ENCODE measurements at regions of chr20 and their contacts with region 1.

Region 1: GRCh38 chr20:4592316-4593148 is 129.2 kb upstream of the PRND start:
- DNase-seq: peak; percentile 38
- H3K4me3 ChIP-seq: peak overlapping the region in 3 of 4 donors; percentile 28 to 47 (median 32)
- H3K27ac ChIP-seq: no peak overlapping the region
- H3K4me1 ChIP-seq: peaks cover 7 to 13% (median 10%) of the 10 kb centered on the region in 4 donors
- H3K27me3 ChIP-seq: no peaks in the 10 kb centered on the region
- CTCF ChIP-seq: peak; percentile 68 to 96 (median 93)
- EP300 ChIP-seq: no peak
- POLR2A ChIP-seq: no peak

Region 2: DNA sequence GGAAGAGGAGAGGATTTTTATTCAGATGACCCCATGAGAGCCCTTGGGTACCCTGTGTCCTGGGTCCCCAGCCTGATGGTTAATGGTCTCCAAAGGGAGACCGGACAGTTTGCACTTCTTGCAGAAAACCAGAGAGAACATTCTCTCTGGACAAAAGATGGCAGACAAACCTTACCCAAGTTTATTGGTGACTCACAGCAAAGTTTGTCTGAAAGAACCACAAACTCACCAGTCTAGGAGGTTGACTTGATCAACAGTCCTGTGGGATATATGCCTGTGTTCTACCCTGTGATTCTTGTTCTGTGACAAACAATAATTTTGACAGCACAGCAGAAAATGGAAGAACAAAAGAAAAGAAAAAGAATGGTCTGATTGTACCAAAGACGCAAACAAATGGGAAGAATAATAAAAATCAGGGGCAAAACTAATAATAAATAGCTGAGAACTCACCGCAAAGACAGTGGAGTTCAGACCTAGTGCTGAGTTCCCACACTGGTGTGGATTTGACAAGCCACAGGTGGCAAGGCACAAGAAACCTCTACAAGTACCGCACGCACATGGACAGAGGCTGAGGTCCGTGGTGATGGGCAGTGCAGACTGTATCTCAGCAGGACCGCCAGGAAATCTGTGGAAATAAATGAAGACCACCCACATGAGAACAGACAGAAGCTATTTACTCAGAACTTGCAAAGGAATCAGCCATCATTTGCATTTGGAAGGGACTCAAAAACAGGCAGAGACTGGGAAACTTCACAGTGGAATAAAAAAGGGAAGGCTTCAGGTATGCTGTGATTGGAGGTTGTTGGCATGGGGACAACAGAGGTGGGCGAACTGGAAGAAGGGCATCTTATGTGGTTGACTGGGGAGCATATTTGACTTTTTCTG is 331.0 kb before region 1 on chr20:
- in situ Hi-C with region 1: loop called in 1 of 4 experiments (anchors 25 kb)
- intact Hi-C with region 1: no loop called
- DNase-seq: no peak
- H3K4me3 ChIP-seq: no peak overlapping the region
- H3K27ac ChIP-seq: no peak overlapping the region
- H3K4me1 ChIP-seq: no peaks in the 10 kb centered on the region
- H3K27me3 ChIP-seq: no peaks in the 10 kb centered on the region
- CTCF ChIP-seq: no peak
- EP300 ChIP-seq: no peak
- POLR2A ChIP-seq: no peak

Measured in transverse colon (tissue), 4 donors.